ENCODE measurements at regions of chr5 and their contacts with region 1.

Region 1: DNA sequence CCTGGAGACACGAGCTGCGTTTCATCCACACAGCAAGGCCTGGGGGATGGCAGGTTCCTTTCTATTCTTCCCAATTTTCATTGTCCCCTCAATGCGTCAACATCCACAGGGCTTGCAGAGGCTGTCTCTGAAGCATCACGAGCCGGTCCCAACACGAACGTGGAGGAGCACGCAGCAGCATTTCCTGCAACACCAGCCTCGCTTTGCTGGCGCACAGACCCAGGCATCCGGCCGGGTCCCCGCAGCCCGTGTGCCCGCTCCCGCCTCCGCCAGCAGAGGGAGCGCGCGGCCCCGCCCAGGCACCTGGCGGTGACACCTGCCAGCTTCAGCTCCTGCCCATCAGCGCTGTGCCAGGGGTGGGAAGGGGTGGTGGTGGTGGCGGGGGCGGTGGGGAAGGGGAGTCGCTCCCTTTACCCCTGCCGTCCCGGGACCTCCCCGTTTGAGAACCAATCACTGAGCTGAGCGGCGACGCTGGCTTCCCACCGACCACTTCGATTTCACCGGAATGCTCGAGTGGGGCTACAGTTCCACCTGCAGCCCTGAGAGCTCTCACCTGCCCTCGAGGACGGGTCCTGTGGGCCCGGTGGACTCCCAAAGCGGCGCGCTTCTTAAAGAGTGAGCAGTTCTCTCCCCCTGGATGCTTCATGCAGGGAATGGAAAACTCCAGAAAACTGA is 464.5 kb downstream of the ICE1 start:
- DNase-seq: peak; percentile 87
- H3K4me3 ChIP-seq: peak overlapping the region in 1 of 8 donors; percentile 28
- H3K27ac ChIP-seq: no peak overlapping the region
- H3K4me1 ChIP-seq: peaks cover 0 to 11% (median 5%) of the 10 kb centered on the region in 6 donors
- H3K27me3 ChIP-seq: peaks cover 0 to 13% (median 5%) of the 10 kb centered on the region in 7 donors
- CTCF ChIP-seq: peak; percentile 27 to 79 (median 61)
- POLR2A ChIP-seq: no peak

Region 2: GRCh38 chr5:5492087-5492933 is 394.6 kb before region 1 on chr5:
- intact Hi-C with region 1: loop called (anchors 10 kb)
- DNase-seq: no peak
- H3K4me3 ChIP-seq: no peak overlapping the region
- H3K27ac ChIP-seq: no peak overlapping the region
- H3K4me1 ChIP-seq: peaks cover 0 to 34% (median 22%) of the 10 kb centered on the region in 6 donors
- H3K27me3 ChIP-seq: peaks cover 0 to 18% (median 0%) of the 10 kb centered on the region in 7 donors
- CTCF ChIP-seq: peak; percentile 17 to 68 (median 61)
- POLR2A ChIP-seq: no peak

Region 3: GRCh38 chr5:5969942-5970484 is 83.1 kb after region 1 on chr5:
- intact Hi-C with region 1: no loop called
- DNase-seq: no peak
- H3K4me3 ChIP-seq: no peak overlapping the region
- H3K27ac ChIP-seq: no peak overlapping the region
- H3K4me1 ChIP-seq: no peaks in the 10 kb centered on the region
- H3K27me3 ChIP-seq: no peaks in the 10 kb centered on the region
- CTCF ChIP-seq: no peak
- POLR2A ChIP-seq: no peak

Region 4: GRCh38 chr5:6029811-6030271 is 142.9 kb after region 1 on chr5:
- intact Hi-C with region 1: no loop called
- DNase-seq: no peak
- H3K4me3 ChIP-seq: no peak overlapping the region
- H3K27ac ChIP-seq: no peak overlapping the region
- H3K4me1 ChIP-seq: no peaks in the 10 kb centered on the region
- H3K27me3 ChIP-seq: no peaks in the 10 kb centered on the region
- CTCF ChIP-seq: no peak
- POLR2A ChIP-seq: no peak

Region 5: GRCh38 chr5:6046296-6046967 is 159.5 kb after region 1 on chr5:
- intact Hi-C with region 1: no loop called
- DNase-seq: peak; percentile 56
- H3K4me3 ChIP-seq: no peak overlapping the region
- H3K27ac ChIP-seq: no peak overlapping the region
- H3K4me1 ChIP-seq: no peaks in the 10 kb centered on the region
- H3K27me3 ChIP-seq: peaks cover 0 to 11% (median 0%) of the 10 kb centered on the region in 7 donors
- CTCF ChIP-seq: no peak
- POLR2A ChIP-seq: no peak

Measured in spleen (tissue), 13 donors.